ENCODE measurements at regions of chr15 and their contacts with region 1.

Region 1: DNA sequence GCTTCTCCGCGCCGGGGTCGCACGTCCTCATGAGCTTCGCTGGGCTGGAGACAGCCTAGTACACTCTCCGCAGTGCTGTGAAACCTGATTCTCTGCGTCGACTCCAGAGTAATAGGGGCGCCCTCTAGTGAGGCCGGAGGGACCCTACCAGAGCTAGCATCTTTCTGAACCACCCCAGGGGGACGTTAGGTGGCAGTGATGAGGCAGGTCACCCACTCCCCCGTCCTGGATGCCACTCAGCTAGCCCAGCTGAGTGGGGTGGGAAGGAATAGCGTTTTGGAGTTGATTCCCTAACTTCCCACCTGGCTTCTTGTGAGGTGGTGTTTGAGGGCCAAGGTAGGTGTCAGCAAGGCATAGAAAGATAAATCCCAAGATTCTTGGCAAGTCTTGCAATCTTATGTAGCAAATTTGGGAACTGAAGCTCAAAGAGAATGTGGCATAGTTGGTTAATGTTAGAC is 4.0 kb downstream of the DUOXA2 start:
- DNase-seq: peak; percentile 93
- H3K4me3 Mint-ChIP-seq: peak overlapping the region; percentile 50
- H3K27ac Mint-ChIP-seq: no peak overlapping the region
- H3K4me1 Mint-ChIP-seq: peaks cover 32% of the 10 kb centered on the region
- H3K27me3 Mint-ChIP-seq: peaks cover 60% of the 10 kb centered on the region

Region 2: GRCh38 chr15:44968475-44968874 is 149.7 kb before region 1 on chr15:
- CTCF ChIA-PET with region 1: interaction called, 4 read pairs
- intact Hi-C with region 1: loop called (anchors 2 kb)
- DNase-seq: no peak
- H3K4me3 Mint-ChIP-seq: no peak overlapping the region
- H3K27ac Mint-ChIP-seq: no peak overlapping the region
- H3K4me1 Mint-ChIP-seq: no peaks in the 10 kb centered on the region
- H3K27me3 Mint-ChIP-seq: no peaks in the 10 kb centered on the region

Region 3: GRCh38 chr15:45022871-45023658 is 95.1 kb before region 1 on chr15 and contains the start of gene SORD:
- CTCF ChIA-PET with region 1: interaction called, 4 read pairs
- intact Hi-C with region 1: loop called (anchors 5 kb)
- DNase-seq: peak; percentile 94
- H3K4me3 Mint-ChIP-seq: peak within 1 kb of the TSS; percentile 83
- H3K27ac Mint-ChIP-seq: peak within 1 kb of the TSS; percentile 46
- H3K4me1 Mint-ChIP-seq: peaks cover 14% of the 10 kb centered on the region
- H3K27me3 Mint-ChIP-seq: peaks cover 7% of the 10 kb centered on the region
- total RNA-seq, gene SORD: 23.1 to 23.8 TPM

Region 4: DNA sequence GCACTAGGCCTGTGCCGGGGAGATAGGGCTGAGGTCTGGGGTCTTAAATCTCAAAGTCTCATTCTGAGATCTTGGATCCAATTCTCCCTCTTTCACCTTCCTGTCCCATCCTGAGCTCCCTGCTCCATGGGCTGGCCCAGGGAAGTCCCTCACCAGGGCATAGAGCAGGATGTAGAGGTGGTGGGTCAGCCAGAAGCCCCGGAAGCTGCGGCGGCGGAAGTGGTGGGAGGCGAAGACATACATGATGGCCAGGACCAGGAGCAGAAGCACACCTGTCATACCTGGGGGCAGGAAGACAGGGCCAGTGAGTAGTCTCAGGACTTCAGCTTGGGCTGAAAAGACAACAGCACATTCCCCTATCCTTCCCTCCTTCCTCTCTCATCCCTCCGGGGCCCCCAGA is 20.7 kb before region 1 on chr15:
- CTCF ChIA-PET with region 1: interaction called, 11 read pairs
- intact Hi-C with region 1: no loop called
- DNase-seq: no peak
- H3K4me3 Mint-ChIP-seq: no peak overlapping the region
- H3K27ac Mint-ChIP-seq: no peak overlapping the region
- H3K4me1 Mint-ChIP-seq: no peaks in the 10 kb centered on the region
- H3K27me3 Mint-ChIP-seq: no peaks in the 10 kb centered on the region

Region 5: GRCh38 chr15:45106002-45106790 is 12.0 kb before region 1 on chr15:
- CTCF ChIA-PET with region 1: interaction called, 16 read pairs
- intact Hi-C with region 1: no loop called
- DNase-seq: no peak
- H3K4me3 Mint-ChIP-seq: no peak overlapping the region
- H3K27ac Mint-ChIP-seq: no peak overlapping the region
- H3K4me1 Mint-ChIP-seq: peaks cover 4% of the 10 kb centered on the region
- H3K27me3 Mint-ChIP-seq: peaks cover 19% of the 10 kb centered on the region

Region 6: GRCh38 chr15:45141366-45141765 is 23.2 kb after region 1 on chr15:
- CTCF ChIA-PET with region 1: interaction called, 12 read pairs
- intact Hi-C with region 1: no loop called
- DNase-seq: no peak
- H3K4me3 Mint-ChIP-seq: no peak overlapping the region
- H3K27ac Mint-ChIP-seq: no peak overlapping the region
- H3K4me1 Mint-ChIP-seq: peaks cover 1% of the 10 kb centered on the region
- H3K27me3 Mint-ChIP-seq: peaks cover 4% of the 10 kb centered on the region

Region 7: DNA sequence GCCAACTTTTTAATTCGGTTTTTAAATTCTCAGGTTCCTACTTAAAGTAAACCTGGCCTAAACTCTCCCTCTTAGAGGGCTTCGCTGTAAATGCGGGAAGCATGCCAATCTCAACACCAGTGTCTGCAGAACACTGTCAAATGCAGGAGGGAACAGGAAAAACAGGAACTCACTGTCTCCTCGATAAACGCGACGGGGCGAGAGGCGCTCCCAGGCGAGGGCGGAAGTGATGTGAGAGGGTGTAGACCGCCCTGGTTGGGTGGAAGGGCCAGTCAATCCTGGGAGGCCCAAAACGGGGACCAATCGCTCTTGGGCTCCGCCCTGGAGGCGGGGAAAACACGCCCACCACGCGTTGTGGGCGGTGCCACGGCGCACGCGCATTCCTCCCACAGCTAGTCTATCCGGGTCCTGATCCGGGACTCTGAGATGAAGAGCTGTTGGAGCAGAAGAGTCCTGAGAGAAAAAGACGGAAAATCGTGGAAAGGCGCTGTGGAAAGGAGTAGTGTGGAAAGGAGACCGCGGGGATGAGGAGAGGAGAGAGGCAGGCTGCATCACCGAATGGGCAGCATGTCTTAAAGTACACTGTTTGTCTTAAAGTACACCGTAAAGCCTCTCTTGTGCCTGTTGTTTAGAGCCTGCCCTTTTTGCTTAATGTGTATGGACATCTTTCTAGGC is 161.0 kb after region 1 on chr15:
- CTCF ChIA-PET with region 1: interaction called, 5 read pairs
- intact Hi-C with region 1: loop called (anchors 2 kb)
- DNase-seq: peak; percentile 96
- H3K4me3 Mint-ChIP-seq: peak overlapping the region; percentile 81
- H3K27ac Mint-ChIP-seq: peak overlapping the region; percentile 52
- H3K4me1 Mint-ChIP-seq: peaks cover 17% of the 10 kb centered on the region
- H3K27me3 Mint-ChIP-seq: no peaks in the 10 kb centered on the region

Measured in activated naive CD4-positive, alpha-beta T cell treated with anti-CD3 and anti-CD28 coated beads for 36 hours (primary cell).